Gastrocnemius medialis (tissue), 4 donors: ENCODE measurements at regions of chr12 and their contacts with region 1.

Region 1: DNA sequence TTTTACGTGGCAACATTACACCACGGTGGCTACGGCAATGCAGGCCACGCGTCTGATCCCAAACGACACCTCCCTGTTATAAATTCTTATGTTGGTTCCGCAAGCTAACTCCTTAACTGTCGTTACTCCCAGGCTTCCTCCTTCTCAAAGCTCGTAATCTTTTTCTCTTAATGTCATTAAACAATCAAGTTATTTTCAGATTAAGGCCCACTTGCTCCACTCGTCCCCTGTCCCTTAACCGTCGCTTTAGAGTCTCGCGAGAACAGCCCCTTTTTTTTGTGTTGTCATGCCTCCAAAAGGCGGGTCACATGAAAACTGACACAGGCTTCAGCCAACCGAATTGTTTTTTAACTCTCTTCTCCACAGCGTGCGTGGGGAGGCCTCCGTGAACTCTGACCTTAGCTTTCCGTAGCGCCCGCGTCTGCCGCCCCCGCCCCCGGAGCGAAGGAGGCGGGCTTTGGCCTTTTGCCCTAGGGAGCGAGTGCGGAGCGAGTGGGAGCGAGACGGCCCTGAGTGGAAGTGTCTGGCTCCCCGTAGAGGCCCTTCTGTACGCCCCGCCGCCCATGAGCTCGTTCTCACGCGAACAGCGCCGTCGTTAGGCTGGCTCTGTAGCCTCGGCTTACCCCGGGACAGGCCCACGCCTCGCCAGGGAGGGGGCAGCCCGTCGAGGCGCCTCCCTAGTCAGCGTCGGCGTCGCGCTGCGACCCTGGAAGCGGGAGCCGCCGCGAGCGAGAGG is at the start of gene CAND1:
- DNase-seq: peak; percentile 97 to 98
- ATAC-seq: peak; percentile 89 to 92
- H3K4me3 ChIP-seq: peak within 1 kb of the TSS; percentile 63 to 96 (median 86)
- H3K27ac ChIP-seq: peak within 1 kb of the TSS; percentile 94 to 98 (median 97)
- H3K4me1 ChIP-seq: peaks cover 38 to 43% of the 10 kb centered on the region in 2 donors
- H3K27me3 ChIP-seq: no peaks in the 10 kb centered on the region
- CTCF ChIP-seq: no peak
- POLR2A ChIP-seq: peak; percentile 81 to 89
- total RNA-seq, gene CAND1: 10.5 to 23.0 (median 13.1) TPM

Region 2: GRCh38 chr12:65278576-65279368 is 1990.3 kb before region 1 on chr12 and contains the start of gene MSRB3:
- in situ Hi-C with region 1: no loop called
- intact Hi-C with region 1: loop called (anchors 10 kb)
- DNase-seq: peak; percentile 58 to 78
- ATAC-seq: peak; percentile 91 to 95
- H3K4me3 ChIP-seq: peak within 1 kb of the TSS; percentile 89 to 99 (median 96)
- H3K27ac ChIP-seq: peak within 1 kb of the TSS; percentile 93 to 96 (median 94)
- H3K4me1 ChIP-seq: peaks cover 28 to 31% of the 10 kb centered on the region in 2 donors
- H3K27me3 ChIP-seq: no peaks in the 10 kb centered on the region
- CTCF ChIP-seq: peak in 1 of 5 experiments; percentile 24
- POLR2A ChIP-seq: peak; percentile 67 to 69
- total RNA-seq, gene MSRB3: 29.0 to 59.0 (median 47.3) TPM

Region 3: DNA sequence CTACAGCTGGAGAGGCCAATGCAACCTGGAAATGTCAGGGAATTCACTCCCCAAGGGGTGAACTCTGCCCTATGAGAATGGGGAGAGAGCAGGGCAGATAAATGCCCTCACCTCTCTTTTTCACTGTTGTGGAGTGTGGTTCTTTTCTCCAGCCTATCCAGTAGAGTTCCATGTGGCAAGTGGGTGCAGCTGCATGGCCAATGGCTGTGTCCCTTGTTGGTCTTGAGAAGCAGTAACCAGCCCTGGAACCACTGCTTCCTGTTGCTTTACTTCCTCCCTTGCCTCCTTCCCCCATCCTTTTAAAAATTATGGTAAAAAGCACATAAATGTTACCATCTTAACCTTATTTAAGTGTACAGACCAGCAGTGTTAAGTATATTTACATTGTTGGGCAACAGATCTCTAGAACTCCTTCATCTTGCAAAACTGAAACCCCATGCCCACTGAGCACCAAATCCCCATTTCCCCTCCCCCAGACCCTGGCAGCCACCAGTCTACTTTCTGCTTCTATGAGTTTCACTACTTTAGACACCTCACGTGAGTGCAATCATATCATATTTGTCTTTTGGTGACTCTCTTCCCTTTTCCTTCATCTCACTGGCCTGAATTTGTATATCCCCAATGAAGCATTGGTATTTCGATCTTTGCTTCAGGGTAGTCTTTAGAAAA is 513.2 kb before region 1 on chr12:
- in situ Hi-C with region 1: no loop called
- intact Hi-C with region 1: no loop called
- DNase-seq: no peak
- ATAC-seq: no peak
- H3K4me3 ChIP-seq: no peak overlapping the region
- H3K27ac ChIP-seq: no peak overlapping the region
- H3K4me1 ChIP-seq: no peaks in the 10 kb centered on the region
- H3K27me3 ChIP-seq: no peaks in the 10 kb centered on the region
- CTCF ChIP-seq: no peak
- POLR2A ChIP-seq: no peak

Region 4: GRCh38 chr12:67441736-67442346 is 172.8 kb after region 1 on chr12:
- in situ Hi-C with region 1: no loop called
- intact Hi-C with region 1: loop called (anchors 5 kb)
- DNase-seq: peak; percentile 78 to 88
- ATAC-seq: peak; percentile 95 to 99
- H3K4me3 ChIP-seq: peak overlapping the region; percentile 45 to 55 (median 50)
- H3K27ac ChIP-seq: peak overlapping the region; percentile 70 to 86 (median 76)
- H3K4me1 ChIP-seq: peaks cover 13 to 18% of the 10 kb centered on the region in 2 donors
- H3K27me3 ChIP-seq: no peaks in the 10 kb centered on the region
- CTCF ChIP-seq: peak; percentile 69 to 86 (median 75)
- POLR2A ChIP-seq: no peak

Region 5: DNA sequence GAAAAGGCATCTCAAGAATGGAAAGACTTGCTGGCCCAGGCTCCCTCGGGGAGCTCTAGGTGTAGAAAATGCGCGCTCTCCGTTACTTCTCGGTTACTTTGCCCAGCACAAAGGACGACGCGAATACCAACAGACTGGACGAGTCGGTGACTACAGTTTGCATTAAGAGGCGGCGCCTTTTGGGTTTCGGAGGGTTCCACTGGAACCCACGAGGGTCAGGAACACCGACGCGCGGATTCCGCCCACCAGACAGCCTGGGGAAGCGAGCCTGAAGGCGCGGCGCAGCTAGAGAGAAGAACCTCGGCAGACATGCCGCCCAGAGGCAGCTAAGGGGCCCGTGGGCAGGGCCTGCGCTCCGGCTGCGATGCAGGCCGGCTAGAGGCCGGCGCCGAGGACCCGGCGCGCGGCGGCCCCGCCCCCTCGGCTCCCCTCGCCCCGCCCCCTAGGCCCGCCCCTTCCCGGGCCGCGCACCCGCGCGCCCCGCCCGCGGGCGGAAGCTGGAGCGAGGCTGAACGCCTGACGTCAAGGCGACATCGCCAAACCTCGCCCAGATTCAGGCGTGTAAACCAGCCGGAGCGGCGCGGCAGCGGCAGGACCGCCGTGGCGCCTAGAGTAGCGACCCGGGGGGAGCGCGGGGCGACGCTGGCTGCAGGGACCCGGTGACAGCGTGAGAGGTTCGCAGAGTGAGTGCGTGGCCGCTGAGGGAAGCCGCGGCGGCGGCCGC is 1341.5 kb after region 1 on chr12 and contains the start of gene RAP1B:
- in situ Hi-C with region 1: no loop called
- intact Hi-C with region 1: loop called (anchors 2 kb)
- DNase-seq: peak; percentile 77 to 88
- ATAC-seq: peak; percentile 91 to 92
- H3K4me3 ChIP-seq: peak within 1 kb of the TSS; percentile 82 to 99 (median 94)
- H3K27ac ChIP-seq: peak within 1 kb of the TSS; percentile 97 to 99 (median 98)
- H3K4me1 ChIP-seq: peaks cover 34 to 39% of the 10 kb centered on the region in 2 donors
- H3K27me3 ChIP-seq: no peaks in the 10 kb centered on the region
- CTCF ChIP-seq: no peak
- POLR2A ChIP-seq: peak; percentile 94
- total RNA-seq, gene RAP1B: 58.4 to 93.8 (median 71.9) TPM

Region 6: GRCh38 chr12:68745904-68746571 is 1477.0 kb after region 1 on chr12 and contains the start of gene SLC35E3:
- in situ Hi-C with region 1: no loop called
- intact Hi-C with region 1: loop called (anchors 10 kb)
- DNase-seq: peak; percentile 85 to 90
- ATAC-seq: peak; percentile 95 to 96
- H3K4me3 ChIP-seq: peak within 1 kb of the TSS; percentile 63 to 92 (median 79)
- H3K27ac ChIP-seq: peak within 1 kb of the TSS; percentile 63 to 84 (median 80)
- H3K4me1 ChIP-seq: peaks cover 21 to 26% of the 10 kb centered on the region in 2 donors
- H3K27me3 ChIP-seq: no peaks in the 10 kb centered on the region
- CTCF ChIP-seq: no peak
- POLR2A ChIP-seq: peak; percentile 54 to 69
- total RNA-seq, gene SLC35E3: 0.92 to 2.7 (median 1.6) TPM